ENCODE measurements at regions of chr17 and their contacts with region 1.

Region 1: DNA sequence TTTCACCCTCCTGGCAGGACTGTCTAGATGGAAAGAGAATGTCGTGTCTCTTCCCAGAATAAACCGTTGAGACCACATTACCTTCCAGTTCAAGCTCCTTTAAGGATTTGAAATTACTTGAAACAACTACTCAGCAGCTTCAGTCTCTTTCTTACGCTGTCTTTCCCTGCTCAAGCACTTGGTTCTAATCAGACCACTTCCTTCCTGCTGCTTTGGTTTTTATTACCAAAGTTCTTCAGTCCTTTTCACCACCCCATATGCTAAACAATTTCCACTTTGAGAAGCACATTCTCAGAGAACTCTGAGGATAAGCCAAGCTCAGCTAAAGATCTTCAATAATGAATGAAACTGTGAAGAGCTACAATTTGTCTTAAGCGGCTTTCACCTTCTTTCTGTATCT is 105.4 kb downstream of the STX8 start:
- DNase-seq: peak; percentile 46
- H3K4me3 ChIP-seq: no peak overlapping the region
- H3K27ac ChIP-seq: no peak overlapping the region
- H3K4me1 ChIP-seq: peaks cover 26% of the 10 kb centered on the region
- H3K27me3 ChIP-seq: no peaks in the 10 kb centered on the region
- CTCF ChIP-seq: no peak
- POLR2A ChIP-seq: no peak

Region 2: GRCh38 chr17:9512323-9513168 is 42.4 kb after region 1 on chr17:
- CTCF ChIA-PET with region 1: interaction called, 3 read pairs
- POLR2A ChIA-PET with region 1: no interaction called
- dilution Hi-C with region 1: no loop called
- intact Hi-C with region 1: loop called (anchors 5 kb)
- DNase-seq: peak; percentile 56
- H3K4me3 ChIP-seq: peak overlapping the region in 1 of 3 experiments; percentile 23
- H3K27ac ChIP-seq: peak overlapping the region; percentile 73
- H3K4me1 ChIP-seq: peaks cover 16% of the 10 kb centered on the region
- H3K27me3 ChIP-seq: no peaks in the 10 kb centered on the region
- CTCF ChIP-seq: no peak
- POLR2A ChIP-seq: no peak

Measured in endothelial cell of umbilical vein (primary cell).